Astrocyte of the cerebellum (primary cell): ENCODE measurements at regions of chrX and their contacts with region 1.

Region 1: DNA sequence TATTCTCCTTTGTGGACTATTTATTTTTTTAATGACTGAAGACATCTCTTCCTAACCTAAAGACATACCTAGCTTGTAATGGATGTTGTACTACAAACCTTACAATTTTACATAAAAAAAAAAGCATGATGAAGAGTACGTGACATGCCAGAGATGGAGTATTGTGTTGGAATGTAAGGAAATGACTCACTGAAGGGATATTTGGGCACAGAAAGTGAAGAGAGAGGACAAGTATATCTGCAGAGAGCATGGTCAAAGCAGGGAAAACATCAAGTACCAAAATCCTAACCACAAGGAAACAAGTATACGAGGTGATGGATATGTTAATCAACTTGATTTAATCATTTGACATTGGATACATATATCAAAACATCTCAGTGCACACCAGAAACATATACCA is 1051.4 kb upstream of the PRKX start:
- DNase-seq: no peak
- H3K4me3 ChIP-seq: no peak overlapping the region
- CTCF ChIP-seq: no peak

Region 2: DNA sequence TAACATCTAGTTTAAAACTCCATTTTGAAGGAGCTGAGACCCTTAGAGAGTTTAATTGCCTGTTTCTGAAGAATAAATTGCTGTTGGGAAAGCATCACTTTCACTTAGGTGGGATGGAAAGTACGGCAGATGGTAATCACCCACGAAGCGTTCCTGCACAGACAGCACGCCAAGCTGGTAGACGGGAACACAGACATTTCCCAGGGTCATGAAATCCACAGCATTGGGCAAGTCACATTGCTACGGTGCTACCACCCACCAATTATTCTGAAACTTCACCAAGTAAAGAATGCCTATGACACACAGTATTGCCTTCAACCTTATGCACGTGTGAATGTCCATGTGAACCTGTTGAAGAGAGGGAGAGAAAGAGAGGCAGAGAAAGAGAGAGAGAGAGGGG is 46.6 kb before region 1 on chrX:
- in situ Hi-C with region 1: loop called (anchors 5 kb)
- DNase-seq: no peak
- H3K4me3 ChIP-seq: no peak overlapping the region
- CTCF ChIP-seq: no peak

Region 3: GRCh38 chrX:4800756-4801155 is 35.9 kb after region 1 on chrX:
- in situ Hi-C with region 1: no loop called
- DNase-seq: no peak
- H3K4me3 ChIP-seq: no peak overlapping the region
- CTCF ChIP-seq: no peak